ENCODE measurements at regions of chr3 and their contacts with region 1.

Region 1: DNA sequence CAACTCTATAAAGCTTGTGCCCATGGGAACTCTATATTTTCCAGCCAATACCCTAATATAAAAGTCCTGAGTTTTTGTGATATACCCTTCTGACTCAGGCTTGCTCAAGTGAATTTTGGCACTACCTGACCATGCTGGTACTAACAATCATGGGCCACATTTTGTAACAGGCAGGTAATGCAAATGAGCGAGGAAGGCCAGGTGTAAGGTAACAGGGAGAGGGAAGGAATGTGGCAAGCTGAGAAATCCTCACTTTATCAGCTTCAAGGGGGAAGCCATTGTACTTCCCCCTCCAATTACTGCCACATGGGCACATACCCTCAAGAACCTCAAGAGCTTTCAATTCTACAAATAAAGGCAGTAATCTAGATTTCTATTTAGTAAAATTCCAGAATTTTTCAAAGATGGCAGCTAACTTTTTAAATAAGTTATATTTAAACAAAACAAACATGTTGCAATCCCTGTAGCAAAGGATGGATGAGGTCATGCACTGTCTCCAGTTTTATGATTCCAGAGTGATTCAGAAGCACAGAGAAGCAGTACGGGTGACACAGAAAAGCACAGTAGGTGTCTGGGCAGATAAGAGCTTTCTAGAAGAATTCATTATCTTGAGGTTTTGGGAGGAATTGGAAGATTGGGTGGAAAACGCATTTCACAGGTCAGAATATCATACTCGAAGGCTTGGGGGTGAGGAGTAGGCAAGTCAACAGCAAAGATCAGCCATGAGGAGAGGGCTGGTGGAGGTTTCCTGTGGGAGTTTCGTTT is 87.6 kb downstream of the FOXP1 start:
- DNase-seq: peak; percentile 41
- H3K4me3 Mint-ChIP-seq: peak overlapping the region; percentile 48
- H3K27ac Mint-ChIP-seq: peak overlapping the region; percentile 68
- H3K4me1 Mint-ChIP-seq: peaks cover 57% of the 10 kb centered on the region
- H3K27me3 Mint-ChIP-seq: no peaks in the 10 kb centered on the region

Region 2: DNA sequence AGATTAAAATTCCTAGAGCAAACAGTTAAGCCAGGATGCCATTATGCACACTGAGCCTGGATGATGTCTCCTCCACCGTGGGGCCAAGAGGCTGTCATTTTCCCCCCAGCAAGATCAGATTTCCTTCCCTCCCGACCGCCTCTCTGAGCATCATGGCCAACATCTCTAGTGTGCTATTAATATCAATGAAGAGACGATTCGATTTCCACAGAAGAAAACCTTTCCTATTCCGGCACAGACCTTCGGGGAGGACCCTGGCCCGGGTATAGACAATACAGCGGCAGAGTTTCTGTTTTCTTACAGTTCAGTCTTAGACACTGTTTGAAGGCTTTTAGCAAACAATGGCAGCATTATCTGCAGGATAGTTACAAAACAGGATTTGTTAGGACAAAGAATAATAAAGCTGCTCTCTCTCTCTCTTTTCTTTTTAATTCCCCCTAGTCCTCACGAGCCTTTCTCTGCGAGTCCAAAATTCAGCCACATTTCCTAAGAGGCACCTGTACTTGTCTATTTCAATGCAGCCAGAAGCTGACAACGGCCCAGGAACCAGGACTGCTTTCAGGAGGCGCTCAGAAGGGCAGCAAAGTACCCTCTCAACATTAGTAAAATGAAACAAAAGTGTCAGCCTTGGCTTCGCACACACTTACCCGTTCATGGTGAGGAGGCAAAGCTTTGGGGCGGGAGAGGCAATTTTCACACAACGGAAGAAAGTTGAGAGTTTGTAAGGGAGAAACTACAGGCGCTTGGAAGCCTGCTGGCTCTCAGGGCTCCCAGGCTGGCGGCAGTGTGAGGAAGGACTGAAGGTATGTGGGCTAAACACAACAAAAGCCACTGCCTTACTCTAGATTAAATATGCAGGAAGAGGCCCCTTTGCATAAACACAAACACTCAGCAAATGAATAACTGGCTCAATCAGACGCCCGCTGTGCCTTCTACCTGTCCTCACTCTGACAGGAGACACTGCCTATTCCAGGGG is 190.4 kb before region 1 on chr3:
- CTCF ChIA-PET with region 1: no interaction called
- POLR2A ChIA-PET with region 1: no interaction called
- DNase-seq: no peak
- H3K4me3 Mint-ChIP-seq: peak overlapping the region; percentile 55
- H3K27ac Mint-ChIP-seq: no peak overlapping the region
- H3K4me1 Mint-ChIP-seq: peaks cover 61% of the 10 kb centered on the region
- H3K27me3 Mint-ChIP-seq: peaks cover 6% of the 10 kb centered on the region

Region 3: DNA sequence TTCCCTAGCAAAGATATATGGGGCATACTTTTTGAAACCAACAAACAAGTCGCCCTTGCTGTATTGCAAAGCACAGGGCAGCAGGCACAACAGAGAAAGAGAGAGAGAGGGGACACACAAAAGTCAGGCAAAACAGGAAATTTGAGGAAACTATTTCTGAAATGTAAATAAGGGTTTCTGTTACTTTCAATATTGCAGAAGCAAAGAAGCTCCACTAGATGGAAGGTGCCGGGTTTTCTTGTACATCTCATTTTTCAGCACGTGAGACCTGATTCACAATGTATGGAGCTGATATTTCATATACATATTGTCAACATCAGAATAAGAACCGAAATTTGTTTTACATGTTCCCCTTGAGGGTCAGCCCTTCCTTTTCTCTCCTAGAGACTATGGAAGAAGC is 39.7 kb before region 1 on chr3:
- CTCF ChIA-PET with region 1: interaction called, 10 read pairs
- POLR2A ChIA-PET with region 1: interaction called, 7 read pairs
- DNase-seq: no peak
- H3K4me3 Mint-ChIP-seq: peak overlapping the region; percentile 36
- H3K27ac Mint-ChIP-seq: peak overlapping the region; percentile 62
- H3K4me1 Mint-ChIP-seq: peaks cover 66% of the 10 kb centered on the region
- H3K27me3 Mint-ChIP-seq: no peaks in the 10 kb centered on the region